ENCODE measurements at regions of chr9 and their contacts with region 1.

Region 1: GRCh38 chr9:36190388-36191287 is at the start of gene CLTA:
- DNase-seq: peak; percentile 98 to 99
- H3K4me3 ChIP-seq: peak within 1 kb of the TSS; percentile 82
- H3K4me3 Mint-ChIP-seq: peak within 1 kb of the TSS; percentile 95
- H3K27ac Mint-ChIP-seq: peak within 1 kb of the TSS; percentile 81
- H3K4me1 ChIP-seq: peaks cover 7% of the 10 kb centered on the region; the same call in 1 of the 2 replicates
- H3K4me1 Mint-ChIP-seq: peaks cover 38% of the 10 kb centered on the region
- H3K27me3 ChIP-seq: no peaks in the 10 kb centered on the region
- H3K27me3 Mint-ChIP-seq: no peaks in the 10 kb centered on the region
- CTCF ChIP-seq: peak in 1 of 2 experiments; percentile 44
- total RNA-seq, gene CLTA: 256 and 269 TPM in 2 replicates

Region 2: DNA sequence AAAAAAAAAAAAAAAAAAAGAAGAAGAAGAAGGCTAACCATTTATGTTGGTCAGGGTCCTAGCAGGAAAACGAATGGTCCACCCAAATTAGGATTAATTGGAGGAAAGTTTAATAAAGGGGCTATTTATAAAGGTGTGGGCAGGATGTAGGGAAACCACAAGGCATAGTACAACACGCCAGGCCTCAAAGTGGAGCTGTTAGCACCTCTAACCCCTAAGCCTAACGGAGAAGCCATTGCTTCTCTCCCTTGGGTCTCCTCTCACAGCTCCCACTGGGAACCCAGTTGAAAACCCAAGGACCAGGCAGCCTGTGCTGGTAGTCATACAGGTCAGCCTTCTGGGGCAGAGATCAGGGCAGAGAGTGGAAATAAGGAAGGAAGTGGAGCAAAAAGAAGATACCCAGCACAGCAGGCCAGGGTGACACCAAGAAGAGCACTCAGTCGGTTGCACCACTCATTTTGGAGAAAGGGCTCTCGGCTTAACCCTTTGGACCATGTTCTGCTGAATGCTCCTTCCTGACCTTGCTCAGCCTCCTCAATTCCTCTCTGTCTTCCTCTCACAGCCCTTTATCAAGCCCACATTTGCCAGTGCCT is 62.9 kb before region 1 on chr9:
- CTCF ChIA-PET with region 1: no interaction called
- POLR2A ChIA-PET with region 1: no interaction called
- intact Hi-C with region 1: no loop called
- DNase-seq: no peak
- H3K4me3 ChIP-seq: no peak overlapping the region
- H3K4me3 Mint-ChIP-seq: no peak overlapping the region
- H3K27ac Mint-ChIP-seq: no peak overlapping the region
- H3K4me1 ChIP-seq: no peaks in the 10 kb centered on the region
- H3K4me1 Mint-ChIP-seq: no peaks in the 10 kb centered on the region
- H3K27me3 ChIP-seq: no peaks in the 10 kb centered on the region
- H3K27me3 Mint-ChIP-seq: no peaks in the 10 kb centered on the region
- CTCF ChIP-seq: no peak

Region 3: GRCh38 chr9:36319806-36320205 is 129.2 kb after region 1 on chr9:
- CTCF ChIA-PET with region 1: interaction called, 5 read pairs
- POLR2A ChIA-PET with region 1: interaction called, 16 read pairs
- intact Hi-C with region 1: loop called (anchors 1 kb)
- DNase-seq: peak; percentile 91 to 95
- H3K4me3 ChIP-seq: no peak overlapping the region
- H3K4me3 Mint-ChIP-seq: peak overlapping the region; percentile 62
- H3K27ac Mint-ChIP-seq: peak overlapping the region; percentile 97
- H3K4me1 ChIP-seq: peaks cover 63% of the 10 kb centered on the region
- H3K4me1 Mint-ChIP-seq: peaks cover 29% of the 10 kb centered on the region
- H3K27me3 ChIP-seq: no peaks in the 10 kb centered on the region
- H3K27me3 Mint-ChIP-seq: no peaks in the 10 kb centered on the region
- CTCF ChIP-seq: no peak

Region 4: DNA sequence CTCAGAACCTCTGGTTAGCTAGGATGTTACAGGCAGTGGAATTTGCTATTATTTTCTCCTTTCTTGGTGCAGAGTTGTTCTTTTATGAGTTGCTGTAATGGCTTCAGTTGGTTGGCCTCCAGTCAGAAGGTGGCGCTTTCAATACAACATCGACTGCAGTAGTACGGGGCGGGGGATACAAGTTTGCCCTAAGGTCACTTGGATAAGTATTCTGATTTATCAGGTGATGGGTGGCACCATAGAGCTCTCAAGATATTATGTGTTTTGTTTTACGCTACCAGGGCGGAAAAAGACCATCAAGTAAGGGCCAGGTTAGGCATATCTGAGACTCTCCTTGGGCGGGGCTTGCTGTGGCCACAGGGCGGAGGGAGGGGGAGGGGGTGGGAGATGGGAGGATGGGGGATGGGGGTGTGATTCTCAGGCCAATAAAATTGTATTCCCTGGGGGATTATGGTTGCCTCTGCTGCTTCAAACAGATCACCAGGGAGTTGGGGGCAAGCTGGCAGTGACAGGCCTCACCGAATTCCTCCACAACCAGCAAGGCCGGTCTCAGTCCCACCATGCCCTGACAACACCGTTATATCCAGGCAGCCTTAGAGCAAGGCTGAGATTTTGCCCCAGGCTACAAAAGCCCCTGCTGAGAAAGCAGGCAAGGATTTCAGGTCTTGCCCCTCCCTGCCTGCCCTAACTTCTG is 225.3 kb after region 1 on chr9:
- CTCF ChIA-PET with region 1: no interaction called
- POLR2A ChIA-PET with region 1: no interaction called
- intact Hi-C with region 1: no loop called
- DNase-seq: peak; percentile 14 to 41
- H3K4me3 ChIP-seq: no peak overlapping the region
- H3K4me3 Mint-ChIP-seq: no peak overlapping the region
- H3K27ac Mint-ChIP-seq: no peak overlapping the region
- H3K4me1 ChIP-seq: peaks cover 29% of the 10 kb centered on the region
- H3K4me1 Mint-ChIP-seq: peaks cover 11% of the 10 kb centered on the region
- H3K27me3 ChIP-seq: no peaks in the 10 kb centered on the region
- H3K27me3 Mint-ChIP-seq: no peaks in the 10 kb centered on the region
- CTCF ChIP-seq: no peak